Mucosa of descending colon (tissue), 3 donors: ENCODE measurements at regions of chr11 and their contacts with region 1.

Region 1: DNA sequence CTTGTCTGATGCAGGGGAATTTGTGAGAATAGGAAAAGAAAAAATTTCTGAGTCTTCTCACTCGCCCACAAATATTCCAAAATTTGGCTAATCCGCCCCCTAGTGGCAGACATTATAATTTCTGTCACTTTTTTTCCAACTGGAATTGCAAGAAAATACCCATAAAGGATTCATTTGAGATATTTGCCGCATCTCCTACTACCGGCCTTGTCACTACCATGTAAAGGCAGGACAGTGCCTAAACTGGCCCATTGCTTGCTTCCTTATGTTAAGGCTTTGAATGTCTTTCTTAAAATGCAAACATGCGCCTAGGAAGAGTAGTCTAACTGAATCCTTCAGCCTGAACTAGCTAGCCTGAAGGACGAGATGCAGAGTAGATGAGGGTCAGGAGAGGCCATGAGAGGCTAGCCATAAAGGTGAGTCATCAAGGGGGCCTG is 9.3 kb upstream of the CEP295 start:
- DNase-seq: peak in 1 of 3 donors; percentile 63
- ATAC-seq: peak; percentile 43
- H3K4me3 ChIP-seq: no peak overlapping the region
- H3K4me1 ChIP-seq: no peaks in the 10 kb centered on the region
- CTCF ChIP-seq: peak; percentile 29

Region 2: GRCh38 chr11:93234602-93235207 is 417.5 kb before region 1 on chr11:
- intact Hi-C with region 1: loop called (anchors 5 kb)
- DNase-seq: peak; percentile 57 to 92 (median 85)
- ATAC-seq: peak; percentile 93
- H3K4me3 ChIP-seq: no peak overlapping the region
- H3K4me1 ChIP-seq: peaks cover 6% of the 10 kb centered on the region
- CTCF ChIP-seq: peak; percentile 81

Region 3: DNA sequence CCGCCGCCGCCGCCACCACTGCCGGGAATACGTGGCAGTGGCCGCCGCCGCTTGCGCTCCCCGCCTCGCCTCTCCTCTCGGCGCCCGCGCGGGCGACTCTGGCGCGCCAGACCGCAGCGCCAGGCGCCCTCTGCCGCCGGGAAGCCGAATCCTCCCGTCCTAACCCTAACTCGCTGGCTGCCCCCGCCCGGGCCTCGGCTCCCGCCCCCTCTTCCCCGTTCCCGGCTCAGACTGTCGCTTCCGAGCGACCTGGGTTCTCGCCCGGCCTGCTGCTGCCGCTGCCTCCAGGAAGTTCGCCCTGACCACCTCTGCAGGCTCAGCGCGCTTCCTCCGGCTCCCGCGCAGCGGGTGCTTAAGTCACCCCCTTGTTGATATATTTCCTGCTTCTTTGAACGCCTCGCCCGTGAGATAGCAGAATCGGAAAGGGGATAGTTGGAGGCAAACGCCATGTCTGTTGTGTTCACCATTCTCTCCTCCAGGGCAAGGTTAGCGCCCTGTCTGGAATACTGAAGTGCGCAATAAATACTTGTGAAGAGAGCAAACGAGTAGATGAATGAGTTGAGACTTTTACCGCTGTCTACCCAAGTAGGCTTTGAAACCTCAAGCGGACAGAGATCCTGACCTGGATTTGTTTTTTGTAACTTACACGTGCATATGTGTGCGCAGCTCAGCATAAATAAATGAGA is 108.7 kb before region 1 on chr11 and contains the start of gene SMCO4:
- intact Hi-C with region 1: loop called in 1 of 2 experiments (anchors 10 kb)
- DNase-seq: peak; percentile 90 to 93 (median 90)
- ATAC-seq: peak; percentile 94
- H3K4me3 ChIP-seq: peak within 1 kb of the TSS; percentile 39
- H3K4me1 ChIP-seq: peaks cover 8% of the 10 kb centered on the region
- CTCF ChIP-seq: peak; percentile 69
- total RNA-seq, gene SMCO4: 37.5 to 75.4 (median 41.5) TPM